ENCODE measurements at regions of chr2 and their contacts with region 1.

Region 1: GRCh38 chr2:68943581-68944568 is 8.8 kb downstream of the GKN2 start:
- DNase-seq: peak; percentile 64
- H3K4me3 ChIP-seq: no peak overlapping the region
- H3K27ac ChIP-seq: no peak overlapping the region
- H3K4me1 ChIP-seq: no peaks in the 10 kb centered on the region
- H3K27me3 ChIP-seq: peaks cover 6 to 29% of the 10 kb centered on the region in 2 experiments
- CTCF ChIP-seq: peak; percentile 70 to 71
- POLR2A ChIP-seq: no peak

Region 2: DNA sequence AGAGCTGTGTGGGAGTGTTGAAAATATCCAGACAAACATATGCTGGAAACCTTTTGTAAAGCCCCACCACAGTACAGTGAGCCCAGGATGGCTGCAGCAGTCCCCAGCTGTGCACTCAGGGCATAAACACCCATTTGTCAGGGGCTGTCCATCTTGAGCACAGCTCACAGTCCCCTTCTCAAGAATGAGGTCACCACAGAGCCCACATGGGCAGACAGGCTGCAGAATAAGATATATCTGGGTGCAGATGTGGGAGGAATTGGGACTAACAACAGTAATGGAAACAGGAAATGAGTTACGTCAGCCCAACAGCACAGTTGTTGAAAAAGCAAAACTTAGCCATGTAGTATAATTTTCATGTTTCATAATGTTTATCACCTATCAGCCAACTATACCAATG is 1327.1 kb before region 1 on chr2:
- CTCF ChIA-PET with region 1: no interaction called
- POLR2A ChIA-PET with region 1: no interaction called
- dilution Hi-C with region 1: no loop called
- intact Hi-C with region 1: no loop called
- DNase-seq: peak; percentile 84
- H3K4me3 ChIP-seq: no peak overlapping the region
- H3K27ac ChIP-seq: no peak overlapping the region
- H3K4me1 ChIP-seq: peaks cover 6% of the 10 kb centered on the region
- H3K27me3 ChIP-seq: no peaks in the 10 kb centered on the region
- CTCF ChIP-seq: no peak
- POLR2A ChIP-seq: no peak

Region 3: DNA sequence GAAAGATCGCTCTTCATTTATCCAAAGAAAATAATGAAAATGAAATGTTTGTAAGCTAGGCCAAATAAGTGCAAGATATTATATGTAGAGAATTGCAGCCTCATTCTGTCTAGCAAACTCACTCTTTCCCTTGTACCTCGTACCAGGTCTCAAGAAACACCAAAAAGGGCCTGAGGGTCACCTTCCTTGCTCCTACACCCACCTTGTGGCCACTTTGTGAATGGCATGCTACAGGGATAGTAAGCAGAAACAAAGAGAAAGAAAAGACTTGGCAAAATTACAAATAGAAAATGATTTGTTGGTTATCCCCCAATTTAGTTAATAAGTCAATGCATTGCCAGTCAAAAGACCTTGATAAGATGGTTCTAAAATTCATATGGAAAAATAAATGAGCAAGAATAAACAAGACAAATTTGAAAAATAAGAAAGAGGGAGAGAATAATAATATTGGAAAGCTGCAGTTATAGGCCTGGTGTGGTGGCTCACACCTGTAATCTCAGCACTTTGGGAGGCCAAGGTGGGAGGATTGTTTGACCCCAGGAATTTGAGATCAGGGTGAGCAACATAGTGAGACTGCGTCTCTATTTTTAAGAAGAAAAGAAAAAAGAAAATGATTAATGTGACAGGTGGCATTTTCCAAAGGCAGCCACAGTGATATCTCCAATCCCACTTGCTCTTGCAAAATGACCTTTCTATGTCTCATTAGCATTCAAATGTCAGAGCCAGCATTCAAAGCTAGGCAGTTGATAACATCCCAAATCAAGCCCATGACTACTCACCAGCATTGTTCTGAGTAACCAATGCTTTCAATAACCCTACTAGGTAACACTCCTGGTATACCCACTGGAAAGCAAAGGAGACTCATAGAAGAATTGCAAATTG is 33.8 kb before region 1 on chr2:
- CTCF ChIA-PET with region 1: interaction called, 11 read pairs
- POLR2A ChIA-PET with region 1: no interaction called
- dilution Hi-C with region 1: no loop called
- intact Hi-C with region 1: no loop called
- DNase-seq: peak; percentile 82
- H3K4me3 ChIP-seq: no peak overlapping the region
- H3K27ac ChIP-seq: no peak overlapping the region
- H3K4me1 ChIP-seq: peaks cover 32% of the 10 kb centered on the region
- H3K27me3 ChIP-seq: peaks cover 4 to 12% of the 10 kb centered on the region in 2 experiments
- CTCF ChIP-seq: peak; percentile 77 to 86
- POLR2A ChIP-seq: no peak

Region 4: DNA sequence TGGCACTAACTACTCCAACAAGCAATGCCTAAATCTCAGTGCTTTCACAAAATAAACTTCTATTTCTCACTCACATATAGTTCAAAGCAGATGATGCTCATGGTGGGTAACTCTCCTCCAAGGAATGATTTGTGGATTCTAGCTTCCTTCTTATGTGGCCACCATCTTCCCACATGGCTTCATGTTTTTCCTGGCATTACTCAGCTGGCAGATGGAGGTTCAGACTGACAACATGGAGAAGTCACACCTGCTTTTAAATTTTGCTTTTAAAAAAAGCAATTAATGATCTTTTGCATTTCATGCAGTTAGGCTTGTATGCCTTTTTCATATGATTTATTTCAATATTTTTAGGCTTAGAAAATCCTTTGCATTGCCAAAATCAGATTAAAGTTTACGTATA is 15.1 kb after region 1 on chr2:
- CTCF ChIA-PET with region 1: interaction called, 28 read pairs
- POLR2A ChIA-PET with region 1: no interaction called
- dilution Hi-C with region 1: no loop called
- intact Hi-C with region 1: no loop called
- DNase-seq: no peak
- H3K4me3 ChIP-seq: no peak overlapping the region
- H3K27ac ChIP-seq: no peak overlapping the region
- H3K4me1 ChIP-seq: no peaks in the 10 kb centered on the region
- H3K27me3 ChIP-seq: peaks cover 4 to 5% of the 10 kb centered on the region in 2 experiments
- CTCF ChIP-seq: no peak
- POLR2A ChIP-seq: no peak

Region 5: DNA sequence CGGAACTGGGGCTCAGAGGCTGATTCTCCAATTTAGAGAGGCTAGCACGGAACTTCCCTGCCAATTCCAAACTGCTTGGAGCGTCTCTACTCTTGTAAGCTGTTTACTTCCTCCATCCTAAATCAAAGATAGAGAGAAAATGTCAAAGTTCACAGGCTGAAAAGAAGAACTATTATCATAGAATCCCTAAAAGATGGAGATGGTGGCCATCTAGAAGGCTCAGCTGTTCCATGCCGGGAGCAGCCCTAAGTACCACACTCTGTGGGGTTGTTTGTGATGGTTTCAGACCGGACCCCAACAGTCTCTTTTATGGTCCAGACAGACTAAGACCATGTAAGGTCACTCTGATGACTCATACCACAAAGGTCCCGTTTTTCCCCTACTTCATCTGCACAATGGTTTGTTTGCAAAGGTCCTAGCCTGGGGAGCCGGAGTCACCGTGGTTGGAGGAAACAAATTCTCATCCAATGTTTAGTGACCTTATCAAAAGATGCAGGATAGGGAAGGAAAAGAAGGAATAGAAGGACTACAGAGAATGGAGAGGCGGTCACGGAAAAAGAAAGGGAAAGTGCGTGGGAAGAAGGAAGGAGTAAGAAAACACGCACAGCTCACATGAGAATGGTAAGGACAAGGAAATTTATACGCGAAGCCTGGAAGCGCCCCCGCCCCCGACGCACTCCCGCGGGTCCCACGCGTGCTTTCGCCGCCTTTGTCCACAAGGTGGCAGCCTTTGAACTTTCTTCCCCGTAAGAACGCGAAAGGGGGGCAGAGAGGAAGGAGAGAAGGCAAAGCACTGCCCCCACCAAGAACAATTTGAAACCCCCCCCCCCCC is 68.7 kb after region 1 on chr2:
- CTCF ChIA-PET with region 1: interaction called, 21 read pairs
- POLR2A ChIA-PET with region 1: no interaction called
- dilution Hi-C with region 1: no loop called
- intact Hi-C with region 1: loop called (anchors 2 kb)
- DNase-seq: peak; percentile 56
- H3K4me3 ChIP-seq: peak overlapping the region in 2 of 3 experiments; percentile 54 to 63
- H3K27ac ChIP-seq: no peak overlapping the region
- H3K4me1 ChIP-seq: peaks cover 13% of the 10 kb centered on the region
- H3K27me3 ChIP-seq: peaks cover 7 to 9% of the 10 kb centered on the region in 2 experiments
- CTCF ChIP-seq: peak; percentile 66 to 74
- POLR2A ChIP-seq: no peak

Region 6: GRCh38 chr2:69509007-69509749 is 565.3 kb after region 1 on chr2:
- CTCF ChIA-PET with region 1: no interaction called
- POLR2A ChIA-PET with region 1: no interaction called
- dilution Hi-C with region 1: no loop called
- intact Hi-C with region 1: no loop called
- DNase-seq: no peak
- H3K4me3 ChIP-seq: no peak overlapping the region
- H3K27ac ChIP-seq: no peak overlapping the region
- H3K4me1 ChIP-seq: peaks cover 15% of the 10 kb centered on the region
- H3K27me3 ChIP-seq: no peaks in the 10 kb centered on the region
- CTCF ChIP-seq: no peak
- POLR2A ChIP-seq: no peak